Prostate gland (tissue), 2 donors: ENCODE measurements at regions of chr9 and their contacts with region 1.

Region 1: GRCh38 chr9:33167046-33167808 is at the start of gene B4GALT1:
- DNase-seq: peak; percentile 95
- H3K4me3 ChIP-seq: peak within 1 kb of the TSS; percentile 88 to 93
- H3K27ac ChIP-seq: peak within 1 kb of the TSS; percentile 97
- H3K4me1 ChIP-seq: peaks cover 14% of the 10 kb centered on the region
- H3K27me3 ChIP-seq: no peaks in the 10 kb centered on the region
- CTCF ChIP-seq: peak in 3 of 4 experiments; percentile 6 to 35 (median 33)
- POLR2A ChIP-seq: peak; percentile 81
- total RNA-seq, gene B4GALT1: 153 to 185 TPM

Region 2: GRCh38 chr9:33081128-33081851 is 85.9 kb before region 1 on chr9:
- intact Hi-C with region 1: loop called (anchors 5 kb)
- DNase-seq: peak; percentile 79
- H3K4me3 ChIP-seq: no peak overlapping the region
- H3K27ac ChIP-seq: peak overlapping the region; percentile 59 to 73
- H3K4me1 ChIP-seq: no peaks in the 10 kb centered on the region
- H3K27me3 ChIP-seq: no peaks in the 10 kb centered on the region
- CTCF ChIP-seq: peak; percentile 40 to 93 (median 84)
- POLR2A ChIP-seq: no peak

Region 3: GRCh38 chr9:33225319-33226149 is 58.3 kb after region 1 on chr9:
- intact Hi-C with region 1: loop called (anchors 5 kb)
- DNase-seq: peak; percentile 78
- H3K4me3 ChIP-seq: no peak overlapping the region
- H3K27ac ChIP-seq: no peak overlapping the region
- H3K4me1 ChIP-seq: no peaks in the 10 kb centered on the region
- H3K27me3 ChIP-seq: no peaks in the 10 kb centered on the region
- CTCF ChIP-seq: peak; percentile 59 to 97 (median 94)
- POLR2A ChIP-seq: no peak

Region 4: DNA sequence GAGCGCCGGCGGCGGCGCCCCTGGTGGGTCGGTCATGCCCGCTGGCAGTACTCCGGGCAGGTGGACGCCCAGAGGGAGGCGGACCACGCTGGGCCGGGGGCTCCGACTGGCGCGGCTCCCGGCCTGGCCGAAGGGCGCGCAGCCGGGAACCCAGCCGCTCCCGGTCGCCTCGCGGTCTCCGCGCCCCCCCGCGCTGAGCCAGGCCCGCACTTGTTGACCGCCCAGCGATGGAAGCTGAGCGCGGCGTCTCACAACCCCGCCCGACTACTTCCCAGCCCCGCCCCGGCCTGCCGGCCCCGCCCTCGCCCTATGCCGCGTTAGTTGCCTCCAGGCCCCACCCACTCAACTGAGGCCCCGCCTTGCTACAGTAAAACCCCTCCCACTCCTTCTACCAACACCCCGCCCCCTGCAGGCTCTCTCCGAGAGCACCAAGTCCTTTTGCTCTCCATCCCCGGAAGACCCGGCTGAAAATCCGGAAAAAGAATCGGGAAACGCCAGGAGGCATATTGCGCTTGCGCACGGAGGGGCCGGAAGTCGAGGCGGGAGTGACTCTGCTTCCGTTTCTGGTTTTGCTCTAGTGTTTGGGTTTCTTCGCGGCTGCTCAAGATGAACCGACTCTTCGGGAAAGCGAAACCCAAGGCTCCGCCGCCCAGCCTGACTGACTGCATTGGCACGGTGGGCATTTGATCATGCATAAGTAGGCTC is 97.4 kb after region 1 on chr9 and contains the starts of genes BAG1 and CHMP5:
- intact Hi-C with region 1: loop called (anchors 5 kb)
- DNase-seq: peak; percentile 100
- H3K4me3 ChIP-seq: peak within 1 kb of the TSS; percentile 85 to 90
- H3K27ac ChIP-seq: peak within 1 kb of the TSS; percentile 89 to 90
- H3K4me1 ChIP-seq: peaks cover 8% of the 10 kb centered on the region
- H3K27me3 ChIP-seq: no peaks in the 10 kb centered on the region
- CTCF ChIP-seq: peak; percentile 43 to 74 (median 56)
- POLR2A ChIP-seq: peak; percentile 96
- total RNA-seq, gene BAG1: 94.9 to 112 TPM
- total RNA-seq, gene CHMP5: 48.8 to 84.2 TPM